Testis (tissue), 5 donors: ENCODE measurements at regions of chr1 and their contacts with region 1.

Region 1: DNA sequence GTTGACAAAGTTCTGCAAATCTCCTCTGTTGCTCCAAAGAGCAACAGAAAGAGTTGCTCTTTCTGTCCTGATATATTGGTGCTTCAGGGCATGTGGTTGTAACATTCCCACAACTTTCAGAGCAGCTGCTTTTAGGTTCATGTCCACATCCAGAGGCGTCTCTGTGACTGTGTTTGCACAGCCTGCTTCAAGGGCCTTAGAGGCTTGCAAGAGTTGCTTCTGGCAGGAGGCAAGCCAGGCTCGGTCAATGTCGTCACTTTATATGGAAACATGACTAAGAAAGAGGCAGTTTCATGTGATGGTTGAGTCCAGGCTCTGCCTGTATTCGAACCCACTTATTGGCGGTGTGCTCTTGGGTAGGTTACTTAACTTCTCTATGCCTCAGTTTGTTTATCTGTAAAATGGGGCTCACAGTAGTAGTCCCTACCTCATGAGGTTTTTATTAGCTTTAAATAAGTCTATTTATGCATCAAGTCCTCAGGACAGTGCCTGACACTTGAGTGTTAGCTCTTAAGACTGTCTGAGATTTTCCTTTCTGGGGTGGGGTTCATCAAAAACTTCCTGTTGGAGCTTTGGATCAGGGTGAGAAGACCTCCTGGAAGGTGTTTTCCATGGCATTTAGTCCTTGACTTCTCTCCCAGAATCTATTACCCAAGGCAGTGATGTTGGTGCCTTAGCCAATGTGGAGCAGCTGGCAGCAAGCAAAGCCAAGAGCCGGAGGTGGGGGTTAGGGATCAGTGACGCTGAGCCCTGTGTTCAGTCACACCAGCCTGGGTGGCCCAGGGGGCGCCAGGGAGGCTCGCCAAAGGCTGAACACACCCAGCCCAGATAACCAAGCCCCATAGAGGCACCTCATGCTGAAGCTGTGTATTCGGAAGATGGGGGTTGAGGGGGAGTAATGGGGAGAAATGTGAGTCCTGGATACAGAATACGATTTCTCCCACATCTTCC is 18.9 kb downstream of the LHX4 start:
- DNase-seq: no peak
- H3K4me3 ChIP-seq: no peak overlapping the region
- H3K27ac ChIP-seq: no peak overlapping the region
- H3K4me1 ChIP-seq: no peaks in the 10 kb centered on the region
- H3K27me3 ChIP-seq: no peaks in the 10 kb centered on the region
- CTCF ChIP-seq: no peak
- POLR2A ChIP-seq: no peak

Region 2: DNA sequence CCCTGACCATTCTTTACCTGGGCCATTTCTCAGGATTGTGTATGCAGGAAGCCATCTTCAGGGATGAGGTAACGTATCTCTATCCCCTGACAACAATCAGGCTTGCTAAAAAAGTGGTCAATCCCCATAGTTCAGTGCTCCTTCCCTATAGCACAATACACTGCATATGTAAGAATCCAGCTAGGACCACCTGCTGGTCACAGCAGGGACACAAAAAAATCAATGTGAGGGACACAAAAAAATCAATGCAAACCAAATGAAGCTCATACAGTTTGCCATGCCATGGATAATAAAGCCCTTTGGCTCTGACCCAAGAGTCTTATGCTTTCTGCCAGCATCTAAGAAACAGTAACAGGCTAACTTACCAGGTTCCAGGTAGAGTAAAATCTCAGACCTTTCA is 237.1 kb after region 1 on chr1:
- intact Hi-C with region 1: loop called (anchors 5 kb)
- DNase-seq: no peak
- H3K4me3 ChIP-seq: no peak overlapping the region
- H3K27ac ChIP-seq: no peak overlapping the region
- H3K4me1 ChIP-seq: no peaks in the 10 kb centered on the region
- H3K27me3 ChIP-seq: no peaks in the 10 kb centered on the region
- CTCF ChIP-seq: peak in 2 of 3 experiments; percentile 10 to 22
- POLR2A ChIP-seq: no peak